ENCODE measurements at regions of chr1 and their contacts with region 1.

Region 1: GRCh38 chr1:212098310-212098709 is 62.8 kb downstream of the DTL start:
- DNase-seq: no peak
- H3K4me3 ChIP-seq: no peak overlapping the region
- H3K27ac ChIP-seq: no peak overlapping the region
- H3K4me1 ChIP-seq: no peaks in the 10 kb centered on the region
- H3K27me3 ChIP-seq: no peaks in the 10 kb centered on the region
- CTCF ChIP-seq: no peak
- EP300 ChIP-seq: no peak
- POLR2A ChIP-seq: no peak

Region 2: DNA sequence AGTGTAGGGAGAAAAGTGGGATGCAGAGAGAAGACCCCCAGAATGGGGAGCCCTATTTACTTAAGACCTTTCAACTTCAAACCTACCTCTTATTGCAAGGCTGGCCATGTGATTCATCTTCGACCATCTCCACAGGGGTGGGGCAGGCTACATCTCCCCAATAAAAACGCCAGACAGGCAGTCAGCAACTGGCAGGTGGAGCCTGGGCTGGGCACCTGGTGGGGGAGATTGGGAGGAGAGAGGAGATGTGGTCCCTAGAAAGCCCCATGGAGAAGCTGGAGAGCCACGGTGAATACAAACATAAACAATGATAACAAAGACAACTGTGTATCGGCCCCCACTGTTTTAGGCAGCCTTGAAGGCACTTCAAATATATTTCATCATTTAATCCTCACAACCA is 1552.8 kb after region 1 on chr1:
- intact Hi-C with region 1: loop called in 1 of 4 experiments (anchors 5 kb)
- DNase-seq: no peak
- H3K4me3 ChIP-seq: no peak overlapping the region
- H3K27ac ChIP-seq: no peak overlapping the region
- H3K4me1 ChIP-seq: no peaks in the 10 kb centered on the region
- H3K27me3 ChIP-seq: no peaks in the 10 kb centered on the region
- CTCF ChIP-seq: no peak
- EP300 ChIP-seq: no peak
- POLR2A ChIP-seq: no peak